Cardiac septum (tissue), 1 donor: ENCODE measurements at regions of chr3 and their contacts with region 1.

Region 1: GRCh38 chr3:150546226-150547044 is at the starts of genes EIF2A and SERP1:
- DNase-seq: peak; percentile 100
- total RNA-seq, gene EIF2A: 65.4 TPM
- total RNA-seq, gene SERP1: 24.0 TPM

Region 2: GRCh38 chr3:149969940-149970715 is 576.3 kb before region 1 on chr3:
- intact Hi-C with region 1: loop called (anchors 10 kb)
- DNase-seq: peak; percentile 88

Region 3: GRCh38 chr3:150515210-150515609 is 31.2 kb before region 1 on chr3:
- intact Hi-C with region 1: no loop called
- DNase-seq: no peak

Region 4: GRCh38 chr3:150603153-150603979 is 56.9 kb after region 1 on chr3 and contains the start of gene SELENOT:
- intact Hi-C with region 1: loop called (anchors 1 kb)
- DNase-seq: peak; percentile 98
- total RNA-seq, gene SELENOT: 75.8 TPM